A549 (cell line): ENCODE measurements at regions of chr17 and their contacts with region 1.

Region 1: DNA sequence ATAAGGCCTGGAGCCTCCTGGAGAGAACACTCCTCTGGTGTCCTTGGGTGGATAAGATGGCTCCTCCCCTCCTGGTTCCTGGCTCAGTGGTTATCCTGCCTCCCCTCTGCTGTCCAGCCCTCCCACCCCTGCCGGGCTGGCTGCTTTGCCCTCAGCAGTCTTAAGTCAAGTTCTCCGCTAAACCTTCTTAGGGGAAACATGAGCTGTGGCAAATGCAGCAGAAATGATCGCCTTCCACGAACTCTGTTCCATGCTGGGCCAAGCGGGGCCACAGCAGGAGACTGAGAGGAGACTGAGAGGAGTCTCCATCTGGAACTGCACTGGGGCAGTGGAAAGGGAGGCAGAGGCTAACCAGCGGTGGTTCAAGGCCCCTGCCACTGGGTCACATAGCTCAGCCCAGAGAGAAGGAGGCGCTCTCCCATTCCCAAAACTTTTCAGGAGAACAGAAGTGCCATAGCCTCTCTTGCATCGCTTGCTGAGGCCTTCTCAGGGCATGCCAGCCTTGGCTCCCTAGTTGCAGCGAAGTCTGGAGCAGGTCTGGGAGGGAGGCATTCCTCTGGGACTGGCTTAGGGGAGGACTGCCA is 26.9 kb downstream of the TNS4 start:
- DNase-seq: no peak
- ATAC-seq: peak; percentile 2 to 4; a peak in 4 of 6 replicates
- H3K4me3 ChIP-seq: no peak overlapping the region
- H3K27ac ChIP-seq: peak overlapping the region; percentile 96 to 97
- H3K4me1 ChIP-seq: peaks cover 83% of the 10 kb centered on the region
- CTCF ChIP-seq: no peak
- EP300 ChIP-seq: no peak
- POLR2A ChIP-seq: 0 out of 2 replicates have a peak, but pooled peaks have one; percentile 5
- RAD21 ChIP-seq: no peak

Region 2: GRCh38 chr17:40191237-40192208 is 283.0 kb before region 1 on chr17:
- CTCF ChIA-PET with region 1: no interaction called
- POLR2A ChIA-PET with region 1: no interaction called
- DNase-seq: peak; percentile 86 to 96
- ATAC-seq: peak; percentile 83 to 91
- H3K4me3 ChIP-seq: peak overlapping the region; percentile 47
- H3K27ac ChIP-seq: peak overlapping the region; percentile 50 to 70
- H3K4me1 ChIP-seq: peaks cover 17% of the 10 kb centered on the region
- CTCF ChIP-seq: peak; percentile 95
- EP300 ChIP-seq: no peak
- POLR2A ChIP-seq: no peak; the same call in 1 of the 2 replicates
- RAD21 ChIP-seq: peak; percentile 74 to 77

Region 3: DNA sequence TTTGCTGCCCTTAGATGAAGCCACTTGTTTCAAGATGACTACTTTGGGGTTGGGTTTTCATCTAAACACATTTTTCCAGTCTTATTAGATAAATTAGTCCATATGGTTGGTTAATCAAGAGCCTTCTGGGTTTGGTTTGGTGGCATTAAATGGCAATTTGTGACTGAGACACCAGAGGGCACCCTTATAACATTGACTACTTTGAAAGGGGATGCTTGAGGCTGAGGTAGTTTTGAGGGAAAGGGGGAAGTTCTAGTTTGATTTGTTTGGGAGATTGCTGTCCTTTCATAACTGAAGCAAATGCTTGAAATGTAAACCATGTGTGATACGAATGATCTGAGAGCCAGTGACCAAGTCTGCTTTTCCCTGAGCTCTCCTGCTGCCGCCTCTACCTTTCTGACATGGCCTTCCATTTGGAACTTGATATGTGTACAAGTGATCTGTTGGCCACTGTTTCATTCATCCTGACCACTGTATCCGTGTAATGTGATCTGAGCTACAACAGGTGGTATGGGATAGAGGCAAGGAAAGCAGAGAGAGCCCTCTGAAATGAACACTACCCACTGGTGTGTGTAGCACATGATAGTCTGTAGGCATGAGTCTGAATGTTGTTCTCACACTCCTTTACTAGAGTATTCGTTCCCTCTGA is 171.4 kb before region 1 on chr17:
- CTCF ChIA-PET with region 1: no interaction called
- POLR2A ChIA-PET with region 1: no interaction called
- DNase-seq: peak; percentile 71 to 78
- ATAC-seq: peak; percentile 65 to 79
- H3K4me3 ChIP-seq: no peak overlapping the region
- H3K27ac ChIP-seq: peak overlapping the region; percentile 17 to 47; a peak in 4 of 6 replicates
- H3K4me1 ChIP-seq: peaks cover 38% of the 10 kb centered on the region
- CTCF ChIP-seq: peak; percentile 97
- EP300 ChIP-seq: no peak
- POLR2A ChIP-seq: no peak
- RAD21 ChIP-seq: peak; percentile 96 to 98

Region 4: GRCh38 chr17:40340880-40341807 is 133.4 kb before region 1 on chr17:
- CTCF ChIA-PET with region 1: no interaction called
- POLR2A ChIA-PET with region 1: no interaction called
- DNase-seq: peak; percentile 92 to 93
- ATAC-seq: peak; percentile 76 to 79
- H3K4me3 ChIP-seq: peak overlapping the region; percentile 83
- H3K27ac ChIP-seq: peak overlapping the region; percentile 91 to 92
- H3K4me1 ChIP-seq: peaks cover 54% of the 10 kb centered on the region
- CTCF ChIP-seq: no peak
- EP300 ChIP-seq: no peak
- POLR2A ChIP-seq: no peak
- RAD21 ChIP-seq: no peak

Region 5: GRCh38 chr17:40362696-40363110 is 111.8 kb before region 1 on chr17:
- CTCF ChIA-PET with region 1: interaction called, 24 read pairs
- POLR2A ChIA-PET with region 1: interaction called, 3 read pairs
- DNase-seq: peak; percentile 93 to 97
- ATAC-seq: peak; percentile 83 to 86
- H3K4me3 ChIP-seq: peak overlapping the region; percentile 61
- H3K27ac ChIP-seq: peak overlapping the region; percentile 84 to 95
- H3K4me1 ChIP-seq: peaks cover 30% of the 10 kb centered on the region
- CTCF ChIP-seq: peak; percentile 85
- EP300 ChIP-seq: no peak
- POLR2A ChIP-seq: peak; percentile 74
- RAD21 ChIP-seq: peak; percentile 73 to 85

Region 6: DNA sequence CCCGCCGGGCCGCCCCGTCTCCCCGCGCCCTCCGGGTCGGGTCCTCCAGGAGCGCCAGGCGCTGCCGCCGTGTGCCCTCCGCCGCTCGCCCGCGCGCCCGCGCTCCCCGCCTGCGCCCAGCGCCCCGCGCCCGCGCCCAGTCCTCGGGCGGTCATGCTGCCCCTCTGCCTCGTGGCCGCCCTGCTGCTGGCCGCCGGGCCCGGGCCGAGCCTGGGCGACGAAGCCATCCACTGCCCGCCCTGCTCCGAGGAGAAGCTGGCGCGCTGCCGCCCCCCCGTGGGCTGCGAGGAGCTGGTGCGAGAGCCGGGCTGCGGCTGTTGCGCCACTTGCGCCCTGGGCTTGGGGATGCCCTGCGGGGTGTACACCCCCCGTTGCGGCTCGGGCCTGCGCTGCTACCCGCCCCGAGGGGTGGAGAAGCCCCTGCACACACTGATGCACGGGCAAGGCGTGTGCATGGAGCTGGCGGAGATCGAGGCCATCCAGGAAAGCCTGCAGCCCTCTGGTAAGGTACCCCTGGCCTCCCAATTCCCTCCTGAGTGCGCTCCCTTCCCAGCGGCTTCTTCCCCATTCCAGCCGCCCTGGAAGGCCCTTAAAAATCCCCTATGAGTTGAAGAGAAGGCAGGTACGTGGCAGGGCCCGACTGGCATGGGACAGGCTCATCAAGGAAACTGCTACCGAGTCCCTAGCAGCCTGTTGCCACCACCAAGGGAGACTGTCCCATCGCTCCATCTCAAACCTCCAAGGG is 30.8 kb before region 1 on chr17:
- CTCF ChIA-PET with region 1: interaction called, 338 read pairs
- POLR2A ChIA-PET with region 1: interaction called, 5 read pairs
- DNase-seq: peak; percentile 81 to 84
- ATAC-seq: peak; percentile 35 to 60
- H3K4me3 ChIP-seq: peak overlapping the region; percentile 78
- H3K27ac ChIP-seq: peak overlapping the region; percentile 98
- H3K4me1 ChIP-seq: peaks cover 30% of the 10 kb centered on the region
- CTCF ChIP-seq: peak; percentile 44
- EP300 ChIP-seq: no peak
- POLR2A ChIP-seq: peak; percentile 52
- RAD21 ChIP-seq: peak; percentile 27 to 34; a peak in 1 of 5 replicates

Region 7: GRCh38 chr17:40490289-40490853 is 15.9 kb after region 1 on chr17:
- CTCF ChIA-PET with region 1: interaction called, 66 read pairs
- POLR2A ChIA-PET with region 1: interaction called, 41 read pairs
- DNase-seq: peak in 1 of 2 experiments; percentile 76
- ATAC-seq: peak in 1 of 2 experiments; percentile 1; a peak in 2 of 6 replicates
- H3K4me3 ChIP-seq: no peak overlapping the region
- H3K27ac ChIP-seq: peak overlapping the region; percentile 96 to 97
- H3K4me1 ChIP-seq: peaks cover 98% of the 10 kb centered on the region
- CTCF ChIP-seq: no peak
- EP300 ChIP-seq: 0 out of 5 replicates have a peak, but pooled peaks have one; percentile 1 to 15
- POLR2A ChIP-seq: no peak
- RAD21 ChIP-seq: no peak

Region 8: DNA sequence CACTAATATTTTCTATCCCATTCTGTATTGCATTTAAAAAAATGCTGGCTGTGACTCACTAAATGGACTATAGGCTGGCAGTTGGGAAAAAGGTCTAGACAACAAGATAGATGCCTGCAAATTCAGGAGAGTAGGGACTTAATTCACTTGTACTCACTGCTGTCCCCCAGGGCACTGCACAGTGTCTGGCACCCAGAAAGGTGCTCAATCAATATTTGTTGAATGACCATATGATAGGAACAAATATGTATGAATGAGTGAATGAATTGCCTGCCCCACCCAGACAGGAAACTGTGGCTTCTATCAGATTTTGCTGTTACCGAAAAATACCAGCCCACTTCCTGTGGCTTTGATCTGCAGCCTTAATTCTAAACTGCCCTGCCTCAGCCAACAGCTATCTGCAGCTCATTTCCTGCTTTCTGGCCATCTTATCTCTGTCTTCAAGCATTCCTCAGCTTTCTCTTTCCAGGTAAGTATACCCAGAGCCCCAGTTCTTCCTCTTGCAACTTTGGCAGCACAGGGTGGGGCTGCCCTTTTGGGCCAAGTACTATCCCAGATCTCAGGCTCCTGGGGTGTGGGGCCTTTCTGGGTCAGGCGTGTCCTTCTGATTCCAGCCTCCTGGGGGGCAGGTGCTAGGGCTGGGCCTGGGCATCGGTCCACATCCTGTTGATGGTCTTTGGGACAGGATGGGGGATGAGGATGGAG is 42.2 kb after region 1 on chr17:
- CTCF ChIA-PET with region 1: interaction called, 822 read pairs
- POLR2A ChIA-PET with region 1: interaction called, 4 read pairs
- DNase-seq: peak; percentile 74 to 85
- ATAC-seq: peak in 1 of 2 experiments; percentile 1; a peak in 2 of 6 replicates
- H3K4me3 ChIP-seq: no peak overlapping the region
- H3K27ac ChIP-seq: peak overlapping the region; percentile 97 to 99
- H3K4me1 ChIP-seq: peaks cover 74% of the 10 kb centered on the region
- CTCF ChIP-seq: no peak
- EP300 ChIP-seq: peak; percentile 69 to 92; a peak in 3 of 5 replicates
- POLR2A ChIP-seq: no peak
- RAD21 ChIP-seq: peak in 1 of 2 experiments; percentile 18; a peak in 1 of 5 replicates

Region 9: GRCh38 chr17:40551879-40552768 is 77.6 kb after region 1 on chr17:
- CTCF ChIA-PET with region 1: interaction called, 203 read pairs
- POLR2A ChIA-PET with region 1: interaction called, 51 read pairs
- DNase-seq: peak; percentile 95 to 99
- ATAC-seq: peak; percentile 51 to 75
- H3K4me3 ChIP-seq: peak overlapping the region; percentile 17; the same call in 2 of the 3 replicates
- H3K27ac ChIP-seq: peak overlapping the region; percentile 95 to 99
- H3K4me1 ChIP-seq: peaks cover 84% of the 10 kb centered on the region
- CTCF ChIP-seq: no peak
- EP300 ChIP-seq: peak; percentile 100
- POLR2A ChIP-seq: no peak
- RAD21 ChIP-seq: peak; percentile 43 to 62